ENCODE measurements at regions of chr1 and their contacts with region 1.

Region 1: GRCh38 chr1:79811173-79811572 is 804.6 kb upstream of the ADGRL4 start:
- DNase-seq: peak; percentile 89
- H3K4me3 ChIP-seq: no peak overlapping the region
- H3K27ac ChIP-seq: peak overlapping the region; percentile 93
- H3K4me1 ChIP-seq: peaks cover 17% of the 10 kb centered on the region
- H3K27me3 ChIP-seq: no peaks in the 10 kb centered on the region
- CTCF ChIP-seq: no peak
- POLR2A ChIP-seq: no peak

Region 2: GRCh38 chr1:79575424-79575823 is 235.7 kb before region 1 on chr1:
- CTCF ChIA-PET with region 1: no interaction called
- POLR2A ChIA-PET with region 1: no interaction called
- dilution Hi-C with region 1: no loop called
- intact Hi-C with region 1: loop called (anchors 1 kb)
- DNase-seq: peak; percentile 96
- H3K4me3 ChIP-seq: no peak overlapping the region
- H3K27ac ChIP-seq: peak overlapping the region; percentile 89
- H3K4me1 ChIP-seq: peaks cover 23% of the 10 kb centered on the region
- H3K27me3 ChIP-seq: no peaks in the 10 kb centered on the region
- CTCF ChIP-seq: no peak
- POLR2A ChIP-seq: peak; percentile 32

Measured in endothelial cell of umbilical vein (primary cell).